Activated T-helper 1 cell treated with anti-CD3 and anti-CD28 coated beads, Interleukin-12 subunit alpha, Interleukin-12 subunit beta, Interleukin-2, Interleukin-4 antibody, amounts not matched to agents 30 ng/mL and 10 ng/mL and 1 ng/mL, durations not matched to agents 14 hours and 24 hours and 36 hours (primary cell): ENCODE measurements at regions of chr10 and their contacts with region 1.

Region 1: GRCh38 chr10:89805599-89806013 is 104.2 kb downstream of the KIF20B start:
- DNase-seq: no peak
- H3K4me3 Mint-ChIP-seq: no peak overlapping the region
- H3K27ac Mint-ChIP-seq: peak overlapping the region; percentile 42
- H3K4me1 Mint-ChIP-seq: peaks cover 31% of the 10 kb centered on the region
- H3K27me3 Mint-ChIP-seq: peaks cover 29% of the 10 kb centered on the region

Region 2: DNA sequence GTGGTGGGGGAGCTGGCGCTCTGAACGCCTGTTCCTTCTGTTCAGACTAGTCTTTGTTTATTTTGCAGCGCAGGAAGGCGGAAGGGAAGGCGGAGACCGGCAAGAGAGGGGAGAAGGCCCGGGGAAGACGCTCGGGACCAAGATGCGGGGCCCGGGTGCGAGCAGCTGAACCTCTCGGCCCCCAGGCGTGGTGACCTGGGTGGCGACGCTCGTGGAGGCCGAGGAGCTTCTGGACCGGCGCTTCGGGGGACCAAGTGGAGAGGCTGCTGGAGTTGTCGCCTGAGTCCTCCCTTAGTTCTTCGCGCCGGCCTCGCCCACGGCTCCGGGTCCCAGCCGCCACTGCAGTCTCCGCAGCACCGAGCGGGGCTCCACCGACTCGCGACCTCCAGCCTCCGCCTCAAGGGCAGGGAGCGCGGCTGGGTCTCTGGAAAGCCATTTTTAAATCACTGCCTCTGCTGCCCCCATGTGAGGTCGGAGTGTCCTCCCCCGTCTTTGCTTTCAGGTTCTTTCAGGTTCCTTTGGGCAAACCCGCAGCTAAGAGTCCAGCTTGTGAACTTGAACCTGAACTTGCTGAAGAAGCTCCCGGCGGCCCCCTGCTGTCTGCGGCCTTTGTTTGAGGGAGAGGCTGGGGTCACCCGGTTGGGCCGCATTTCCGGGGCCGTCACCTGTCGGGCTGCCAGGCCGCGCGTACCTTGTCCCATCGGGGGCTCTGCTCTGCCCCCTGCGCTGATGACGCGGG is 31.7 kb after region 1 on chr10:
- intact Hi-C with region 1: loop called (anchors 2 kb)
- DNase-seq: peak; percentile 3
- H3K4me3 Mint-ChIP-seq: peak overlapping the region; percentile 80
- H3K27ac Mint-ChIP-seq: peak overlapping the region; percentile 40
- H3K4me1 Mint-ChIP-seq: peaks cover 7% of the 10 kb centered on the region
- H3K27me3 Mint-ChIP-seq: peaks cover 12% of the 10 kb centered on the region

Region 3: DNA sequence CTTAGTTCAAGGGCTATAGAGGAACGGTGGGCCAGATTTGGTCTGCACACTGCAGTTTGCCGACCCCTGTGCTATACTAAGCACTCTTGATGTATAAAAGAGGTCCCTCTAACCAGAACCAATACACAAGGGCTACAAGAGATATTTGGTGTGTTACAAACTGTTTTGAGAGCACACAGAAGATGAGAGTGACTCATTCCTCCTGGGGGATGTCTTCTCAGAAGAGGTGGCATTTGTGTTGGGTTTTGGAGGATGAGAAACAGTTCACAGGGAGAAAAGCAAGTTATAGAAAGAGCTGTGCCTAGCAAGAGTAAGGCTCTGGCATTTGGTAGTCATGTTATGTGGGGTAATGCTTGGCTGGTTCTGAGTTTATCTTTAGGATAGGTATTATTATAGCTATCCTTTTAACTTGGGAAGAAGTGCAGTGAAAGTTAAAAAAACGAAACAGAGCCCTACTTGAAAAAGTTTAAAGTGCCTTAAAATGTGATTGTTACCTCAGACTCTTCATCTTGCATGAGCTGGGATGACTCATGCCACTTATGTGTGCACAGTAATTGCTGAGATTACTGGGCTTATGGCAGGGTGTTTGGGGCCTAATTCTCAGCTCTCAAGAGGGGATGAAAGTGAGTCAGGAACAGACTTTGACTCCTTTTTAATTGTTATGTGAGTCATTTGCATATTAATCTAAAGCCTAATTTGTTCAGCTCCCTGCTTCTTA is 56.1 kb after region 1 on chr10:
- intact Hi-C with region 1: loop called (anchors 1 kb)
- DNase-seq: no peak
- H3K4me3 Mint-ChIP-seq: peak overlapping the region; percentile 13
- H3K27ac Mint-ChIP-seq: peak overlapping the region; percentile 79
- H3K4me1 Mint-ChIP-seq: peaks cover 20% of the 10 kb centered on the region
- H3K27me3 Mint-ChIP-seq: peaks cover 2% of the 10 kb centered on the region

Region 4: DNA sequence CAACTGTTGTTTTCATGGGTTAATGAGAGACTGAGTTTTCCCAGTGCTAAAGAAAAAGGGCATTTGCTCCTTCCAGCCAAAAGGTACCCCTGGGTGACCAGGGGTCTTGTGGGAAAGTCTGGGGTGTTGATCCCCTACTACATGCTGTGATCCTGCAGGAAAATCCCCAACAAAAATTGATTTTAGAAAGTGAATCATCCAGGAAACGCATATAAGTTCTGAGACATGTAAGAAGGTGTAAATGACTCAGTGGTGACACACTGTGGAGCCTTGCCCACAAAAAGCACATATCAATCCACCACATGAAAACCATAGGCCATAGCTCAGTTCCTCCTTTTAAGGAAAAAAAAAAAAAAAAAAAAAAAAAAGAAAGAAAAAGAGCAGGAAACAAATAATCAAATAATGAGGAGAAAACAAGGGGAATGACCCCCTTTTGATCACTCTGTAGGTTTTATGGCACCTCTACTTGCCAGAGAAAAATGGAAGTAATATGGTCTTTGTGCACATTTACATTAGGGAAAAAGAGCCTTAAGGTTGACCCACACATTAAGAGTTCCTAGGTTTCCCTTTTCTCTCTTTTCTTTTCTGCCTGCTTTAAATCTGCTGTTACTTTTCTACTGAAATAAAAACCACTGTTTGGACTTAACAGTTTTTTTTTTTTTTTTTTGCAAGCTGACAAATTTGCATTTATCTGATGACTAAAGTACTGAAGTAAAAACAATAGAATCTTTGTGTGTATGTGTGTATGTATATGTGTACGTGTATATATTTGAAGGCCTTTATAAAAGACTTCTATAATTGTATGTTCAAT is 281.8 kb after region 1 on chr10:
- intact Hi-C with region 1: loop called (anchors 5 kb)
- DNase-seq: no peak
- H3K4me3 Mint-ChIP-seq: no peak overlapping the region
- H3K27ac Mint-ChIP-seq: no peak overlapping the region
- H3K4me1 Mint-ChIP-seq: peaks cover 7% of the 10 kb centered on the region
- H3K27me3 Mint-ChIP-seq: peaks cover under 1% of the 10 kb centered on the region

Region 5: GRCh38 chr10:90227217-90227656 is 421.6 kb after region 1 on chr10:
- intact Hi-C with region 1: loop called (anchors 1 kb)
- DNase-seq: no peak
- H3K4me3 Mint-ChIP-seq: no peak overlapping the region
- H3K27ac Mint-ChIP-seq: peak overlapping the region; percentile 63
- H3K4me1 Mint-ChIP-seq: peaks cover 6% of the 10 kb centered on the region
- H3K27me3 Mint-ChIP-seq: peaks cover 8% of the 10 kb centered on the region